GM12878 (cell line): ENCODE measurements at regions of chr16 and their contacts with region 1.

Region 1: GRCh38 chr16:84562174-84562815 is 55.6 kb downstream of the COTL1 start:
- DNase-seq: peak; percentile 64
- ATAC-seq: peak; percentile 92
- H3K4me3 ChIP-seq: no peak overlapping the region
- H3K27ac ChIP-seq: peak overlapping the region; percentile 66
- H3K4me1 ChIP-seq: peaks cover 21% of the 10 kb centered on the region
- H3K27me3 ChIP-seq: no peaks in the 10 kb centered on the region
- CTCF ChIP-seq: no peak
- EP300 ChIP-seq: peak in 1 of 2 experiments; percentile 6; a peak in 1 of 4 replicates
- POLR2A ChIP-seq: no peak; the same call in 1 of the 2 replicates
- RAD21 ChIP-seq: no peak

Region 2: GRCh38 chr16:84518748-84519341 is 43.5 kb before region 1 on chr16:
- CTCF ChIA-PET with region 1: interaction called, 6 read pairs
- POLR2A ChIA-PET with region 1: interaction called, 5 read pairs
- RAD21 ChIA-PET with region 1: interaction called, 5 read pairs
- SMC1A ChIA-PET with region 1: interaction called, 35 read pairs
- in situ Hi-C with region 1: no loop called
- intact Hi-C with region 1: loop called (anchors 2 kb)
- DNase-seq: no peak
- ATAC-seq: no peak
- H3K4me3 ChIP-seq: no peak overlapping the region
- H3K27ac ChIP-seq: no peak overlapping the region
- H3K4me1 ChIP-seq: peaks cover 34% of the 10 kb centered on the region
- H3K27me3 ChIP-seq: no peaks in the 10 kb centered on the region
- CTCF ChIP-seq: no peak
- EP300 ChIP-seq: no peak
- POLR2A ChIP-seq: no peak
- RAD21 ChIP-seq: no peak

Region 3: DNA sequence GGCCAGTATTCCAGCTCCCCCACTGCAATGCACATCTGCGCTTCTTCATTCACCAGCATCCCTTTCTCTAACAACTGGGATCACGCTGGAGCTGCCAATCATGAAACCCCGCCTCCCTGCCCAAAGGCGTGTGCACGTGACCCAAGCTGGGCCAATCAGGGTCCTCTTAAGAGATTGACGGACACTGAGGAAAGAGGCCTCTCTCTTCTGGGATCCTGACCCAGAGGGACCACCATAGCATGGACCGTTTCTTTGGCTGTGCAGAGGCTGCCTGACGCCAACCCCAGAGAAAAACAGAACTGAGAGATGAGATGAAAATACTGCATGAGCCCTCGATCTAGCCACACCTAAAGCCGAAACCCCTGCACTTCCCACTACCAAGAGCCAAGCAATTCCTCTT is 23.6 kb after region 1 on chr16:
- CTCF ChIA-PET with region 1: interaction called, 3 read pairs
- POLR2A ChIA-PET with region 1: interaction called, 3 read pairs
- RAD21 ChIA-PET with region 1: interaction called, 3 read pairs
- SMC1A ChIA-PET with region 1: interaction called, 17 read pairs
- in situ Hi-C with region 1: no loop called
- intact Hi-C with region 1: no loop called
- DNase-seq: no peak
- ATAC-seq: peak; percentile 96
- H3K4me3 ChIP-seq: peak overlapping the region; percentile 45; the same call in 1 of the 2 replicates
- H3K27ac ChIP-seq: peak overlapping the region; percentile 24
- H3K4me1 ChIP-seq: peaks cover 19% of the 10 kb centered on the region
- H3K27me3 ChIP-seq: no peaks in the 10 kb centered on the region
- CTCF ChIP-seq: no peak
- EP300 ChIP-seq: no peak
- POLR2A ChIP-seq: peak; percentile 53; the same call in 1 of the 2 replicates
- RAD21 ChIP-seq: no peak

Region 4: DNA sequence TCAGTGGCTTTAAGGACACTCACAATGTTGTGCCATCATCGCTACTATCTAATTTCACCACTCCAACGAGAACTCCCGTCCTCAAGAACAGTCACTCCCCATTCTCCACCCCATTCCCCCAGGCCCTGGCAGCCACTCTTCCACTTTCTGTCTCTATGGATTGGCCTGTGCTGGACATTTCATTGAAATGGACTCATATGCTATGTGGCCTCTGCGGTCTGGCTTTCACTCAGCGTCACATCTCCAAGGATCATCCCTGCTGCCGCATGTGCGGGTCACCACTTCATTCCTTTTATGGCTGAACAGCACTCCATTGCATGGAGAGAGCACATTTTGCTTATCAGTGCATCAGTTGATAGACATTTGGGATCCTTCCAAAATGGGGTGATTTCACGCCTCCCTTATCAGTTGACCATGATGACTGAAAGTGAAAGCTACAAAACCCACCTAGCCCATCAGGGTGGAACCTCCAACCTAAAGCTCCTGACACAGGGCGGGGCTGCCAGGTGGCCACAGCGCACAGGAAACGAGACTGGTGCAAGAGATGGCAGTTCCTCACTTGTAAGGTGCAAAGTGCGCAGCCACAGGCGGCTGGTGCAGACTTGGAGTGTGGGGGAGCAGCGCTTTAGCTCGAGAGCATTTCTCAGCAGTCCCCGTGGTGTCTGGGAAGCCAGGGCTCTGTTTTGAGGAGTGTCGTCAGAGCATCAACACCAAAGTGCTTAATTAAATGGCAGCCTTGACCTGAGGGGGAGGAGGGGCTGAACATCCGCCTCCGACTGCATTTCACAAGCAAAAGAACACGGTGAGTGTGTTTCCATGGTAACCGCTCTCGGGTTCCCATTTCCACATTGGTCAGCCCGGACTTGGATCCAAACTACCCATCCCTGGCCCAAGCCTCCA is 31.8 kb after region 1 on chr16:
- CTCF ChIA-PET with region 1: interaction called, 3 read pairs
- POLR2A ChIA-PET with region 1: interaction called, 10 read pairs
- RAD21 ChIA-PET with region 1: interaction called, 11 read pairs
- SMC1A ChIA-PET with region 1: interaction called, 17 read pairs
- in situ Hi-C with region 1: no loop called
- intact Hi-C with region 1: no loop called
- DNase-seq: peak; percentile 99
- ATAC-seq: peak; percentile 87
- H3K4me3 ChIP-seq: peak overlapping the region; percentile 77
- H3K27ac ChIP-seq: peak overlapping the region; percentile 97
- H3K4me1 ChIP-seq: peaks cover 57% of the 10 kb centered on the region
- H3K27me3 ChIP-seq: no peaks in the 10 kb centered on the region
- CTCF ChIP-seq: no peak
- EP300 ChIP-seq: peak; percentile 96 to 99
- POLR2A ChIP-seq: peak; percentile 85
- RAD21 ChIP-seq: peak; percentile 20; the same call in 1 of the 2 replicates

Region 5: GRCh38 chr16:84714028-84714427 is 151.7 kb after region 1 on chr16:
- CTCF ChIA-PET with region 1: no interaction called
- POLR2A ChIA-PET with region 1: no interaction called
- RAD21 ChIA-PET with region 1: no interaction called
- SMC1A ChIA-PET with region 1: no interaction called
- in situ Hi-C with region 1: no loop called
- intact Hi-C with region 1: no loop called
- DNase-seq: no peak
- ATAC-seq: no peak; the same call in 2 of the 3 replicates
- H3K4me3 ChIP-seq: no peak overlapping the region
- H3K27ac ChIP-seq: no peak overlapping the region
- H3K4me1 ChIP-seq: peaks cover 9% of the 10 kb centered on the region
- H3K27me3 ChIP-seq: no peaks in the 10 kb centered on the region
- CTCF ChIP-seq: no peak
- EP300 ChIP-seq: no peak
- POLR2A ChIP-seq: no peak
- RAD21 ChIP-seq: no peak

Region 6: DNA sequence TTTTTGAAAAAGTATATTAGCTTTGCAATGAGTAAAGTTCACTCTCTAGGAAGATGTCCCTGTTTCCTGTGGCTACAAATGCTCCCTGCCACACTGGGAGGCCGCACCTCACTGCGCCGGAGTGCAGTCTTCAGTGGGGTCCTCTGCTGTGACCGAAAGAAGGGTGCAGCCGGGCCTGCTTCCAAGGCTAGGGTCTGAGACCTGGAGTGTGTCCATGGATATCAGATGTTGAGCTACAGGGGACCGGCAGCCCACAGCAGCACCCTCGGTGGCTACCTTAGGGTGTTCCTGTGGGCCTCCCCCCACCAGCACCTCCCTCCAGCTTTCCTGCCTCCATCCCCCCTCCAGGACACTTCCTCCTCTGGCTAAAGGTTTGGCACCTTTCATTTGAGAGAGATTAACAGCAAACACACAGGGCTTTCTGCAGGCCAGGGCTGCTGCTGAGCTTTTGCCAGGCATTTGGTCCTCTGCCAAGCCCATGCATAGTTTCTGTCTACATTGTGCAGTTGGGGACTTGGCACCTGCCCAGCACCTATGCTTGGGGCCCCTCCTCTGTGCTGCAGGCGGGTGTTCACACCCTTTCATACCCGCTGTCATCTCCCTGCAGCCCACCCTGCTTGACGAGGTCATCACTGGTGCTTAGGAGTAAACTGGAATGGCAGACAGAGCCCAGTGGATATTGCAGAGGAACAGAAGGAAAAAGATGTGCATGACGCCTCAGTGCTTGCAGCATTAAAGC is 223.7 kb after region 1 on chr16:
- CTCF ChIA-PET with region 1: no interaction called
- POLR2A ChIA-PET with region 1: no interaction called
- RAD21 ChIA-PET with region 1: no interaction called
- SMC1A ChIA-PET with region 1: no interaction called
- in situ Hi-C with region 1: no loop called
- intact Hi-C with region 1: no loop called
- DNase-seq: no peak
- ATAC-seq: no peak
- H3K4me3 ChIP-seq: no peak overlapping the region
- H3K27ac ChIP-seq: no peak overlapping the region
- H3K4me1 ChIP-seq: no peaks in the 10 kb centered on the region
- H3K27me3 ChIP-seq: no peaks in the 10 kb centered on the region
- CTCF ChIP-seq: no peak
- EP300 ChIP-seq: no peak
- POLR2A ChIP-seq: no peak
- RAD21 ChIP-seq: no peak

Region 7: GRCh38 chr16:84907575-84907974 is 345.3 kb after region 1 on chr16:
- CTCF ChIA-PET with region 1: no interaction called
- POLR2A ChIA-PET with region 1: no interaction called
- RAD21 ChIA-PET with region 1: no interaction called
- SMC1A ChIA-PET with region 1: no interaction called
- in situ Hi-C with region 1: no loop called
- intact Hi-C with region 1: no loop called
- DNase-seq: no peak
- ATAC-seq: no peak
- H3K4me3 ChIP-seq: no peak overlapping the region
- H3K27ac ChIP-seq: no peak overlapping the region
- H3K4me1 ChIP-seq: no peaks in the 10 kb centered on the region
- H3K27me3 ChIP-seq: no peaks in the 10 kb centered on the region; a peak in 1 of 4 replicates
- CTCF ChIP-seq: no peak
- EP300 ChIP-seq: no peak
- POLR2A ChIP-seq: no peak
- RAD21 ChIP-seq: no peak